Mammary epithelial cell (primary cell): ENCODE measurements at regions of chr11 and their contacts with region 1.

Region 1: GRCh38 chr11:64688534-64688982 is 34.4 kb downstream of the NRXN2 start:
- DNase-seq: peak; percentile 61
- H3K4me3 ChIP-seq: peak overlapping the region in 2 of 3 experiments; percentile 21 to 27
- H3K27ac ChIP-seq: no peak overlapping the region
- H3K4me1 ChIP-seq: peaks cover 19% of the 10 kb centered on the region
- H3K27me3 ChIP-seq: no peaks in the 10 kb centered on the region
- CTCF ChIP-seq: peak; percentile 72 to 82

Region 2: GRCh38 chr11:64489831-64490441 is 198.6 kb before region 1 on chr11:
- CTCF ChIA-PET with region 1: no interaction called
- dilution Hi-C with region 1: no loop called
- in situ Hi-C with region 1: no loop called
- intact Hi-C with region 1: loop called (anchors 1 kb)
- DNase-seq: peak; percentile 27
- H3K4me3 ChIP-seq: no peak overlapping the region
- H3K27ac ChIP-seq: no peak overlapping the region
- H3K4me1 ChIP-seq: no peaks in the 10 kb centered on the region
- H3K27me3 ChIP-seq: peaks cover 2% of the 10 kb centered on the region
- CTCF ChIP-seq: peak; percentile 69 to 95

Region 3: DNA sequence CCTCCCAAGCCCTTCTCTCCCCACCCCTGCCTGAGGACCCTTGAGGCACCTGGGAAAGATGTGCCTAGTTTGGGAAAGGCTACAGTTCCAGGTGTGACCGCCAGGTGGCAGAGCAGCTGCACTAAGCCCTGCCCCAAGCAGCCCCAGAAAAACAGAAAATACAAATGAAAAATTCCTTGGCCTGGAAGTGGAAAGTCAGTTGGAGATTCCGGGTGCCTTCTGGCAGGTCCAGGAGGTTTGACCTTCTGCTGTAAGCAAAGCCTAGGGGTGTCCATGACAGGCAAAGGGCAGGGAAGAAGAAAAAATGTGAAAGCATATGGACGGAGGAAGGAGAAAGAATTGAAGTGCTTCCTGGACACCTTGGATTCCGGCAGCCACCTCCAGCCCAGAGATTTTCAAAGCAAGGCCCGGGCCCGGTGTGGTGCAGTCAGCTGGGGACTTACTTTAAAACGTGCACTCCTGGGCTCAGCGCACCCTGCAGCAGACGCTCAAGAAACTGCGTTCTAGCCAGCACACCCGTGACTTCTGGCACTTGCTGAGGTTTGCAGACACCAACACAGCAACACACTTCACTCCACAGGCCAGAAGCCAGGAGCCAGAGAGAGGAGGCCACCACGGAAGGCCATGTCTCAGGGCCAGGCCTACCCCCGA is 134.9 kb before region 1 on chr11:
- CTCF ChIA-PET with region 1: no interaction called
- dilution Hi-C with region 1: no loop called
- in situ Hi-C with region 1: no loop called
- intact Hi-C with region 1: loop called (anchors 1 kb)
- DNase-seq: no peak
- H3K4me3 ChIP-seq: no peak overlapping the region
- H3K27ac ChIP-seq: no peak overlapping the region
- H3K4me1 ChIP-seq: no peaks in the 10 kb centered on the region
- H3K27me3 ChIP-seq: no peaks in the 10 kb centered on the region
- CTCF ChIP-seq: peak; percentile 91 to 97

Region 4: DNA sequence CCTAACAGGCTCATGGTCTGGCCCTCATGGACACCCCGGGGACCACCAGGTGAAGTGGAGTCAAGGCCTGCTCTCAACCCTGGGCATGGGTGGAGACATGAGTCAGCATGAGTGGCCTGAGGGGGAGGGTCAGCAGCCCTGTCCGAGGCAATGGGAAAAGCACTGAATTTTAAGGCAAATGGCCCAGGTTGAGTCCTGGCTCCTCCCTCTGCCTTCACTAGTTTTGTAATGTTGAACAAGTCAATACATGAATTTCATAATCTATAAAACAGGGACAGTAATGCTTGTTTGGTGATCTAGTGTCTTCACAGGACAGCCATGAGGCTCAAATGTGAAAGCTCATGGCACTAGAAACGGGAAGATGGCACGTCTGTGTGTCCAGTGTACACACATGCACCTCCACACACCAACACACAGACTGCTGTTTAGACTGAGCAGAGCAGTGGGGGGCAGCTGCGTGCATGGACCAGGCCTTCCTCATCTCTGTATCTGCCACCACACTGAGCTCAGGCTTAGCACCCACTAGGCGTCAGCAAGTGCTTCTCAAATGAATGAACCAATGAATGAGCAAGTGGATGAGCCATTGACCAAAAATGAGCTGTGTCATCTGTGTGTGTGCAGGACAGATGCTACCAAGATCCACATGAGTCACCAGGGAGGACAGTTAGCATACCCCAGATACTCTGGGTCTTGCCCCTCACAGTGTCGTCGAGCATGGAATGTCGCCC is 29.0 kb before region 1 on chr11:
- CTCF ChIA-PET with region 1: interaction called, 3 read pairs
- dilution Hi-C with region 1: no loop called
- in situ Hi-C with region 1: no loop called
- intact Hi-C with region 1: loop called (anchors 1 kb)
- DNase-seq: peak; percentile 88
- H3K4me3 ChIP-seq: no peak overlapping the region
- H3K27ac ChIP-seq: peak overlapping the region; percentile 57
- H3K4me1 ChIP-seq: peaks cover 26% of the 10 kb centered on the region
- H3K27me3 ChIP-seq: no peaks in the 10 kb centered on the region
- CTCF ChIP-seq: peak in 1 of 2 donors; percentile 50

Region 5: GRCh38 chr11:64723117-64723906 is 34.8 kb after region 1 on chr11 and contains the start of gene NRXN2:
- CTCF ChIA-PET with region 1: no interaction called
- dilution Hi-C with region 1: no loop called
- in situ Hi-C with region 1: no loop called
- intact Hi-C with region 1: loop called (anchors 1 kb)
- DNase-seq: peak; percentile 77
- H3K4me3 ChIP-seq: peak within 1 kb of the TSS; percentile 55 to 85 (median 57)
- H3K27ac ChIP-seq: no peak within 1 kb of the TSS
- H3K4me1 ChIP-seq: peaks cover 8% of the 10 kb centered on the region
- H3K27me3 ChIP-seq: no peaks in the 10 kb centered on the region
- CTCF ChIP-seq: peak; percentile 80 to 95
- total RNA-seq, gene NRXN2: 4.5 to 18.8 TPM

Region 6: GRCh38 chr11:64742889-64743590 is 54.5 kb after region 1 on chr11:
- CTCF ChIA-PET with region 1: no interaction called
- dilution Hi-C with region 1: no loop called
- in situ Hi-C with region 1: no loop called
- intact Hi-C with region 1: loop called (anchors 2 kb)
- DNase-seq: peak; percentile 28
- H3K4me3 ChIP-seq: peak overlapping the region; percentile 26 to 47 (median 34)
- H3K27ac ChIP-seq: no peak overlapping the region
- H3K4me1 ChIP-seq: peaks cover 24% of the 10 kb centered on the region
- H3K27me3 ChIP-seq: peaks cover 18% of the 10 kb centered on the region
- CTCF ChIP-seq: peak; percentile 45 to 81

Region 7: GRCh38 chr11:64854534-64855429 is 166.2 kb after region 1 on chr11:
- CTCF ChIA-PET with region 1: no interaction called
- dilution Hi-C with region 1: no loop called
- in situ Hi-C with region 1: no loop called
- intact Hi-C with region 1: no loop called
- DNase-seq: peak; percentile 93
- H3K4me3 ChIP-seq: no peak overlapping the region
- H3K27ac ChIP-seq: peak overlapping the region; percentile 68
- H3K4me1 ChIP-seq: peaks cover 48% of the 10 kb centered on the region
- H3K27me3 ChIP-seq: no peaks in the 10 kb centered on the region
- CTCF ChIP-seq: no peak